Activated naive CD4-positive, alpha-beta T cell treated with anti-CD3 and anti-CD28 coated beads for 36 hours (primary cell): ENCODE measurements at regions of chr9 and their contacts with region 1.

Region 1: GRCh38 chr9:121827251-121827967 is 176.0 kb downstream of the DAB2IP start:
- DNase-seq: no peak
- H3K4me3 Mint-ChIP-seq: no peak overlapping the region
- H3K27ac Mint-ChIP-seq: no peak overlapping the region
- H3K4me1 Mint-ChIP-seq: no peaks in the 10 kb centered on the region
- H3K27me3 Mint-ChIP-seq: no peaks in the 10 kb centered on the region

Region 2: GRCh38 chr9:121071756-121072421 is 755.5 kb before region 1 on chr9:
- CTCF ChIA-PET with region 1: no interaction called
- intact Hi-C with region 1: no loop called
- DNase-seq: peak; percentile 39
- H3K4me3 Mint-ChIP-seq: peak overlapping the region; percentile 81
- H3K27ac Mint-ChIP-seq: peak overlapping the region; percentile 88
- H3K4me1 Mint-ChIP-seq: peaks cover 46% of the 10 kb centered on the region
- H3K27me3 Mint-ChIP-seq: no peaks in the 10 kb centered on the region

Region 3: GRCh38 chr9:121850366-121850765 is 23.0 kb after region 1 on chr9:
- CTCF ChIA-PET with region 1: no interaction called
- intact Hi-C with region 1: loop called (anchors 1 kb)
- DNase-seq: no peak
- H3K4me3 Mint-ChIP-seq: no peak overlapping the region
- H3K27ac Mint-ChIP-seq: no peak overlapping the region
- H3K4me1 Mint-ChIP-seq: no peaks in the 10 kb centered on the region
- H3K27me3 Mint-ChIP-seq: no peaks in the 10 kb centered on the region